Dorsolateral prefrontal cortex (tissue), 120 donors: ENCODE measurements at regions of chr2 and their contacts with region 1.

Region 1: GRCh38 chr2:55232084-55232862 is at the starts of genes CLHC1 and RPS27A:
- DNase-seq: peak; percentile 79 to 93 (median 90)
- H3K4me3 ChIP-seq: peak within 1 kb of the TSS; percentile 65 to 100 (median 93)
- H3K27ac ChIP-seq: peak within 1 kb of the TSS; percentile 80 to 99 (median 97)
- H3K27me3 ChIP-seq: no peaks in the 10 kb centered on the region
- CTCF ChIP-seq: peak in 34 of 56 donors; percentile 6 to 59 (median 34)
- total RNA-seq, gene CLHC1: 12.9 to 62.6 (median 27.4) TPM
- total RNA-seq, gene RPS27A: 221 to 469 (median 349) TPM

Region 2: DNA sequence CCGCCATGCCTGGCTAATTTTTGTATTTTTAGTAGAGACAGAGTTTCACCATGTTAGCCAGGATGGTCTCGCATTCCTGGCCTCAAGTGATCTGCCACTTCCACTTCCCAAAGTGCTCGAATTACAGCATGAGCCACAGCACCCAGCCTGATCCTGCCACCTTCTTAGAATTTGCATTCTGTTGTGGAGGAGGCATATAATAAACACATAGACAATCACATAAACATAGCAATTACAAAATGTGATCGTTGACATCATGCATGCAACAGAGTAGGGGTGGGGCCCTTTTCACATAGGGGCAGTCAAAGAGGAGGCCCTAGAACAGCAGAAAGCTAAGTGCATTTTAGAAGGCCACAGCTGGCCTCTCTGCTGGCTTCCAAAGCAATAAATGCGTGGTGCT is 936.4 kb before region 1 on chr2:
- intact Hi-C with region 1: no loop called
- DNase-seq: no peak
- H3K4me3 ChIP-seq: no peak overlapping the region
- H3K27ac ChIP-seq: no peak overlapping the region
- H3K27me3 ChIP-seq: no peaks in the 10 kb centered on the region
- CTCF ChIP-seq: no peak

Region 3: GRCh38 chr2:55133467-55134315 is 98.6 kb before region 1 on chr2:
- intact Hi-C with region 1: no loop called
- DNase-seq: peak in 1 of 10 donors; percentile 76
- H3K4me3 ChIP-seq: peak overlapping the region; percentile 3 to 70 (median 47)
- H3K27ac ChIP-seq: peak overlapping the region; percentile 7 to 99 (median 96)
- H3K27me3 ChIP-seq: no peaks in the 10 kb centered on the region
- CTCF ChIP-seq: peak in 4 of 56 donors; percentile 3 to 20 (median 12)

Region 4: GRCh38 chr2:55268907-55269644 is 36.8 kb after region 1 on chr2 and contains the start of gene MTIF2:
- intact Hi-C with region 1: loop called (anchors 5 kb)
- DNase-seq: peak; percentile 88 to 95 (median 93)
- H3K4me3 ChIP-seq: peak within 1 kb of the TSS; percentile 52 to 96 (median 82)
- H3K27ac ChIP-seq: peak within 1 kb of the TSS; percentile 46 to 95 (median 88)
- H3K27me3 ChIP-seq: no peaks in the 10 kb centered on the region
- CTCF ChIP-seq: peak in 53 of 56 donors; percentile 16 to 66 (median 46)
- total RNA-seq, gene MTIF2: 15.2 to 33.5 (median 24.3) TPM

Region 5: DNA sequence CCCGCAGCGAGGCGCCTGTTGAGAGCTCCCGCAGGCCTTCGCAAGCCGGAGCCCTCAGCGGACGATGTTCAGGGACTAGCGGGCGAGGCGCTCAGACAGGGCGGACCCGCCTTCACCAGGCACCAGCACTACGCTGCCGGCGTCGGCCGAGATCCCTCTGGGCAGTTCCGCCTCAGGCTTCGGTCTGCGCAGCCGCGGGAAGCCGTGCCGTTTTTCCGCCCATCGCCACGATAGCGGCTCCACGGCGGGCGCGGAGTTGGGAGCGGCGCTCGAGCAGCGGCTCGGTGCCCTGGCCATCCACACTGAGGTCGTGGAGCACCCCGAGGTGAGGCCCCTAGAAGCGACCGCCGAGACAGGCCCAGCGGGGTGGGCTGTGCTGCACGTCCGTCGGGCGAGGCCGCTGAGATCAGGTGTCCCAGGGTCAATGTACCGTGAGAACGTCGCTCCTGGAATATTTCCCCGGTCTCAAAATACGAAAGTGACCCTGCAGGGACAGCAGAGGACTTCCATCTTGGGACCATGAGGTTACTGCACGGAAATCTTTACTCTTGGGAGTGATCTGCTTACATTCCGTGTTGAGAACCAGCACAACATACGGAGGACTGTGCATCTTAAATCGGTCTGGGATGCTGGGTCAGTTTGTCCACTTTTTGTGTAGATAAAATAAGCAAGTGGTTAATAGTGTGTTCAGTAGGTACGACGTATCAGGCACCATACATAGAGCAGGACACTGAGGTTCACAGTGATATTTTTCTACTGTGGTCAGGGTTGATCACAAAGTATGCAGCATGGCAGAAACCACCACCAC is 50.0 kb after region 1 on chr2:
- intact Hi-C with region 1: loop called in 1 of 2 experiments (anchors 5 kb)
- DNase-seq: peak; percentile 67 to 90 (median 82)
- H3K4me3 ChIP-seq: peak overlapping the region; percentile 56 to 94 (median 79)
- H3K27ac ChIP-seq: peak overlapping the region; percentile 75 to 99 (median 95)
- H3K27me3 ChIP-seq: no peaks in the 10 kb centered on the region
- CTCF ChIP-seq: peak in 23 of 56 donors; percentile 9 to 48 (median 21)

Region 6: GRCh38 chr2:55419679-55420438 is 187.6 kb after region 1 on chr2 and contains the start of gene CCDC88A:
- intact Hi-C with region 1: loop called in 1 of 2 experiments (anchors 5 kb)
- DNase-seq: peak; percentile 89 to 97 (median 93)
- H3K4me3 ChIP-seq: peak within 1 kb of the TSS; percentile 70 to 96 (median 88)
- H3K27ac ChIP-seq: peak within 1 kb of the TSS; percentile 86 to 99 (median 98)
- H3K27me3 ChIP-seq: no peaks in the 10 kb centered on the region
- CTCF ChIP-seq: peak in 46 of 56 donors; percentile 11 to 65 (median 38)
- total RNA-seq, gene CCDC88A: 151 to 514 (median 261) TPM

Region 7: GRCh38 chr2:55431982-55432627 is 199.8 kb after region 1 on chr2:
- intact Hi-C with region 1: loop called in 1 of 2 experiments (anchors 5 kb)
- DNase-seq: no peak
- H3K4me3 ChIP-seq: peak overlapping the region in 1 of 59 donors; percentile 5
- H3K27ac ChIP-seq: peak overlapping the region in 12 of 59 donors; percentile 2 to 67 (median 33)
- H3K27me3 ChIP-seq: no peaks in the 10 kb centered on the region
- CTCF ChIP-seq: peak; percentile 42 to 87 (median 70)

Region 8: GRCh38 chr2:55519938-55520885 is 287.9 kb after region 1 on chr2:
- intact Hi-C with region 1: loop called in 1 of 2 experiments (anchors 5 kb)
- DNase-seq: peak in 4 of 10 donors; percentile 24 to 46 (median 34)
- H3K4me3 ChIP-seq: peak overlapping the region; percentile 62 to 99 (median 86)
- H3K27ac ChIP-seq: peak overlapping the region in 58 of 59 donors; percentile 28 to 97 (median 91)
- H3K27me3 ChIP-seq: no peaks in the 10 kb centered on the region
- CTCF ChIP-seq: no peak

Region 9: GRCh38 chr2:55617175-55618024 is 385.1 kb after region 1 on chr2 and contains the start of gene PPP4R3B:
- intact Hi-C with region 1: loop called in 1 of 2 experiments (anchors 1 kb)
- DNase-seq: peak; percentile 95 to 99 (median 98)
- H3K4me3 ChIP-seq: peak within 1 kb of the TSS; percentile 63 to 100 (median 96)
- H3K27ac ChIP-seq: peak within 1 kb of the TSS; percentile 86 to 100 (median 96)
- H3K27me3 ChIP-seq: no peaks in the 10 kb centered on the region
- CTCF ChIP-seq: peak in 54 of 56 donors; percentile 13 to 75 (median 56)
- total RNA-seq, gene PPP4R3B: 46.1 to 75.8 (median 59.3) TPM